Head of caudate nucleus (tissue), 42 donors: ENCODE measurements at regions of chr14 and their contacts with region 1.

Region 1: GRCh38 chr14:73472185-73473114 is 14.1 kb upstream of the NUMB start:
- DNase-seq: peak in 16 of 42 donors; percentile 10 to 69 (median 34)

Region 2: GRCh38 chr14:73173092-73173735 is 299.2 kb before region 1 on chr14:
- intact Hi-C with region 1: loop called (anchors 2 kb)
- DNase-seq: peak in 13 of 42 donors; percentile 15 to 65 (median 34)

Region 3: GRCh38 chr14:73576391-73576790 is 103.9 kb after region 1 on chr14:
- intact Hi-C with region 1: no loop called
- DNase-seq: peak in 1 of 42 donors; percentile 24